ENCODE measurements at regions of chr12 and their contacts with region 1.

Region 1: DNA sequence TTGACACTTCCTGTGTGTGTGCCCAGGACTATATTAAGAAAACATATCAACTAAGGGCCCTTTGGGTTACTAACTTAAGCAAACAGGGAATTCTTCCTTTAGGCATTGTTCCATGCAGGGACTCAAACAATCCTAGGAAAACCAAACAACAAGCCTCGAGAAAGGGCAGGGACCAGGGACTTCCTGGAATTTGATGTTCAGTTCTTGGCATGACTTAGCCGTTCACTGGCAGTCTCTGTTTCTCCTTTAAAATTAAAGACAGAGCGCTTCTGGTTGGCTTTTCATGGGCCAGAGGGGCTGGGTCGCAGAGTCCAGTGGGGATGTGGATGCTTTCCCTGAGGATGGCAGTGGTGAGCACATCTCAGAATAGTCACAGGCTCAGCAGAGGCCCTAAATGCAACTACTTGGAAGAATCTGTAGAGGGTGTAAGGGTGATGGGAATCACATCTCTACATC is 35.2 kb downstream of the RNFT2 start:
- DNase-seq: no peak
- H3K4me3 ChIP-seq: no peak overlapping the region
- H3K27ac ChIP-seq: no peak overlapping the region
- H3K27me3 ChIP-seq: no peaks in the 10 kb centered on the region
- CTCF ChIP-seq: no peak

Region 2: GRCh38 chr12:116898669-116899068 is 125.4 kb after region 1 on chr12:
- CTCF ChIA-PET with region 1: interaction called, 11 read pairs
- POLR2A ChIA-PET with region 1: no interaction called
- DNase-seq: no peak
- H3K4me3 ChIP-seq: no peak overlapping the region
- H3K27ac ChIP-seq: no peak overlapping the region
- H3K27me3 ChIP-seq: peaks cover 4% of the 10 kb centered on the region
- CTCF ChIP-seq: no peak